Right lobe of liver (tissue), 6 donors: ENCODE measurements at regions of chr4 and their contacts with region 1.

Region 1: GRCh38 chr4:147707865-147708672 is 23.8 kb upstream of the ARHGAP10 start:
- DNase-seq: peak in 1 of 3 donors; percentile 58
- ATAC-seq: peak; percentile 85 to 93 (median 89)
- H3K4me3 ChIP-seq: no peak overlapping the region
- H3K27ac ChIP-seq: no peak overlapping the region
- H3K4me1 ChIP-seq: no peaks in the 10 kb centered on the region
- H3K27me3 ChIP-seq: no peaks in the 10 kb centered on the region
- CTCF ChIP-seq: peak; percentile 89 to 96 (median 90)
- POLR2A ChIP-seq: no peak

Region 2: GRCh38 chr4:147866532-147867271 is 158.6 kb after region 1 on chr4:
- intact Hi-C with region 1: loop called (anchors 5 kb)
- DNase-seq: peak; percentile 87 to 92 (median 90)
- ATAC-seq: peak; percentile 95 to 96 (median 96)
- H3K4me3 ChIP-seq: no peak overlapping the region
- H3K27ac ChIP-seq: no peak overlapping the region
- H3K4me1 ChIP-seq: peaks cover 0 to 8% (median 2%) of the 10 kb centered on the region in 4 donors
- H3K27me3 ChIP-seq: no peaks in the 10 kb centered on the region
- CTCF ChIP-seq: peak; percentile 100
- POLR2A ChIP-seq: no peak